ENCODE measurements at regions of chr2 and their contacts with region 1.

Region 1: GRCh38 chr2:121649596-121650314 is 493 bp upstream of the CLASP1 start:
- DNase-seq: peak; percentile 97
- ATAC-seq: peak; percentile 95
- H3K4me3 Mint-ChIP-seq: peak overlapping the region; percentile 100
- H3K27ac Mint-ChIP-seq: peak overlapping the region; percentile 98
- H3K4me1 Mint-ChIP-seq: peaks cover 57% of the 10 kb centered on the region
- H3K27me3 Mint-ChIP-seq: no peaks in the 10 kb centered on the region

Region 2: DNA sequence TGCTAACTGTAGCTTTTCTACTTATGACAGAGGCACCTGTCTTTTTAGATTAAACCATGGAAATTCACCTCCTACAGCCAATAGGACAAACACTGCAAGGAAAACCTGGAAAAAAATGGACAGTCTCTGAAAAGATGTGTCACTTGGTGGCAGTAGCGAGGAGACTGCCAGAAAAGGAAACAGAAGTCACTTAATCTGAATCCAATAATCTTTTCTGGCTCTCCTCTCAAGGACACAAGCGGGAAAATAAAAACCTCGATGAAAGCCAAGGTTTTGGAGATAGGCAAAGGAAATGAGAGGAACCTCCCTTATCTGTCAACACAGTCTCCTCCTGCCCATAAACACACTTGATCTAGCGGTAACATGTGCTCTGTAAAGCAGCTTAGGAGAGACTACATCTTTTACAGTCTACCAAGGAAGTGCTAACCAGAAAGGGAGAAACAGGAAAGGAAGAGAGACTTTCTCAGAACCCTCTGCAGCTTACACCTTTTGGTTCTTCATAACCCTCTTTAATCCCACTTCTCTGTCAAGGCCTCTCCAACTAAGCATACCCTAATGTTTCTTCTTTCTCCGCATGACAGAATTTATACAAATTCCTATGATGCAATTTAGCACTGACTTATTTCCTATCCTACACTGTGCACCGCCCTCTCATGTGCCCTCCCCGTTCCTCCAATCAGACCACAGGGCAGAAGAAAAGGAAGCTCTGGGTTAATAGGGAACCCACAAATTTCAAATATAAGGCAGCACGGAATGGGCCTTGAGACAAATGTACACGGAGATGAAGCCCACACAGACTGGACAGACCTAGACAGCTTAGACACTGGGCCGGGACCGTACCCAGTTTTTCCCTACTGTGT is 53.3 kb before region 1 on chr2:
- CTCF ChIA-PET with region 1: interaction called, 10 read pairs
- POLR2A ChIA-PET with region 1: interaction called, 8 read pairs
- DNase-seq: peak; percentile 48
- ATAC-seq: peak; percentile 84
- H3K4me3 Mint-ChIP-seq: peak overlapping the region; percentile 69
- H3K27ac Mint-ChIP-seq: peak overlapping the region; percentile 75
- H3K4me1 Mint-ChIP-seq: peaks cover 47% of the 10 kb centered on the region
- H3K27me3 Mint-ChIP-seq: no peaks in the 10 kb centered on the region

Region 3: GRCh38 chr2:121736462-121737341 is 86.9 kb after region 1 on chr2 and contains the start of gene NIFK:
- CTCF ChIA-PET with region 1: interaction called, 4 read pairs
- POLR2A ChIA-PET with region 1: interaction called, 23 read pairs
- DNase-seq: peak; percentile 100
- ATAC-seq: peak; percentile 92
- H3K4me3 Mint-ChIP-seq: peak within 1 kb of the TSS; percentile 98
- H3K27ac Mint-ChIP-seq: peak within 1 kb of the TSS; percentile 97
- H3K4me1 Mint-ChIP-seq: peaks cover 47% of the 10 kb centered on the region
- H3K27me3 Mint-ChIP-seq: peaks cover 3% of the 10 kb centered on the region
- total RNA-seq, gene NIFK: 79.8 to 80.1 TPM

Region 4: DNA sequence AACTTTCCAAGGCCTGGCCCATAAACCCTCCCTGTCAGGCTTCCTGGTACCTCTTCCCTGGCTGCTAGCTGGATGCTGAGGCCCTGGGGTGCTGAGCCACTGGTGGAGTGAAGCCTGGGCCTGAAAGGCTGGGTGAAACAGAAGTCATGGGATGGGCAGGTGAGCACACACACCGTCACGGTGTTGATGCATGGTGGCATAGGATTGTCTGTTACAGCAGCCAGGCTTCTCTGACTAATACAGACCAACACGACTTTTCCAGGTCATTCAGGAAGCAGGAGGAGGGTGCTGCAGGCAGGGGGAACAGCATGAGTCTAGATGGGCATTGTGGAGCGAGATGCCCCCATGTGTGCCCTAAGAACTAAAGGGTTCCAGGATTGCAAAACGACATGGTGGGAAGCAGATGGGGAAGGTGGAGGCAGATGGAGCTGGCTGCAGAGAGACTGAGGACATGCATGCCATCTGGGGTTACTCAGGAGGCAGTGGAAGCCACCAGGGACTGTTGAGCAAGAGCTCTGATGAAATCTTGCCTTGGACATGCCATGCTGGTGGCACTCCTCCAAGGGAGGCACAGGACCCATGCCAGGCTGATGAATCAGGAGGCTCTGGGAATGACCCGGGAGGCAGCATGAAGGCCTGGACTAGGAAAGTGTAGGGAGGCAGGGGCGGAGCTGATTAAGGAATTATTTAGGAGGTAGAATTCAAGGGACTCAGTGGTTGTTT is 586.6 kb after region 1 on chr2:
- CTCF ChIA-PET with region 1: no interaction called
- POLR2A ChIA-PET with region 1: no interaction called
- DNase-seq: no peak
- ATAC-seq: no peak
- H3K4me3 Mint-ChIP-seq: no peak overlapping the region
- H3K27ac Mint-ChIP-seq: no peak overlapping the region
- H3K4me1 Mint-ChIP-seq: no peaks in the 10 kb centered on the region
- H3K27me3 Mint-ChIP-seq: no peaks in the 10 kb centered on the region

Measured in activated CD8-positive, alpha-beta T cell treated with anti-CD3 and anti-CD28 coated beads, Interleukin-2, amount 10 ng/mL, durations not matched to agents 7 days and 5 days (primary cell).